Heart left ventricle (tissue), 16 donors: ENCODE measurements at regions of chr15 and their contacts with region 1.

Region 1: DNA sequence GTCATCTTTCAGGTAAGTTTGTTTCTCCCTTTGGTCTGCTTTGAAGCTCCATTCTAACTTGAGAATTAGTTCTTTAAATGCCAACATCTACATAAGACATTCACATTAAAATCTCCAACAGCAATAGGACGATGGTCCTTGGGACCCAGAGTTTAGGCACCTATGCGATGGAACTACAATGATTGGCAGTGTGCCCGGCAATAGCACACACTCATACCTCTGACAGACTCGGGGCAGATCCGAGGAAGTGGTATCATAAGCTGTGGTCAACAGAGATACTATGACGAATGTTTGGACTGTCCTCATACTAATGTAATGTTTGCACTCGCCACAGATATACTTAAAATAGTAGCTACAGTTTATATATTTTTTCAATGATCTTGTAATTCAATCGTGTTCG is 34.2 kb upstream of the NR2F2 start:
- DNase-seq: no peak
- ATAC-seq: no peak
- H3K4me3 ChIP-seq: no peak overlapping the region
- H3K27ac ChIP-seq: no peak overlapping the region
- H3K4me1 ChIP-seq: no peaks in the 10 kb centered on the region
- H3K27me3 ChIP-seq: no peaks in the 10 kb centered on the region
- CTCF ChIP-seq: no peak
- POLR2A ChIP-seq: no peak

Region 2: DNA sequence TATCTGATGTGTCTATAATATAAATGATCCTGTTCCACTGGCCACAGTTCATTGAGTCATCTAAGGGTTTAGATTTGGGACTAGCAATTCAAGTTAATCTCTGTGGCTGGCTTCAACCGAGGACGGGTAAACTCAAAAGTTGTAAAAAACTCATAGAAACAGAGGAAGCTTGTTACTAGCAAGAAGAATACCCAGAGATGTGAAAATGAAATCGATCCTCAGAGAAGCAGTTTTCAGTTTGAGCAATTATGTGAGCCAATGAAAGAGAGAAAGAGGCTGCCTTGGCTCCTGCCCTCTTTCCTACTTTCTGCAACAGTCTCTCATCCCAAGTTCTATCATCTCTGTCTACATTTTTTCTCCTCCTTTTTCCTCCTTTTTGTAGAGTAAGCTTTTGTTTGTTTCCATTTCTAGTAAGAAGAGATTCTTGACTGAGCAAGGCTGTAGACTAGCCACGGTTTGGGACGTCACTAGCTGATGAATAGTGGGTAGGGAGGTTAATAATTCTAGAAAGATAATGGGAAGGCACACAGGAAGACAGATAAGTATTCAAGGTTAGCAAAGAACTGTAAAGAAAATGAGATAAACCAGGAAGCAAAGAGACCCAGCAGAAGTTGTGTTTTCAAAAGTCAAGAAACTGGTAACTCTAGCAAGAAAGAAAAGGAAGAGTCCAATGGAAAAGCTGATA is 264.7 kb before region 1 on chr15:
- intact Hi-C with region 1: no loop called
- DNase-seq: no peak
- ATAC-seq: no peak
- H3K4me3 ChIP-seq: no peak overlapping the region
- H3K27ac ChIP-seq: no peak overlapping the region
- H3K4me1 ChIP-seq: peaks cover 0 to 2% (median 0%) of the 10 kb centered on the region in 12 donors
- H3K27me3 ChIP-seq: no peaks in the 10 kb centered on the region
- CTCF ChIP-seq: no peak
- POLR2A ChIP-seq: no peak

Region 3: DNA sequence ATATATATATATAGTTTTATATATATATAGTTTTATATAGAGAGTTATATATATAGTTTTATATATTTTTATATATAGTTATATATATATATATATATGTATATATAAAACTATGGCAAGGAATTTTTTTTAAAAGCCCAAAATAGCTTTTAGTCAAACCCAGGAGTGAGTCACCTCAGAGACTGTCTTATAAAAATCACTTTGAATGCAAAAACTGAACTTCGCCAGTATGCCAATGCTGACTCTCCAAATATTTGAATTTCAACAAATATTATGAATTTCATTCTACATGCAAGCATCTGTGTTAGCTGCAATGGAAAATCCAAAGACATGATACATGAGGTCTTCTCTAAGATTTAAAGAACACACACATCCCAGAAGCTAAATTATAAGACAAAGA is 98.5 kb before region 1 on chr15:
- intact Hi-C with region 1: loop called in 1 of 10 experiments (anchors 10 kb)
- DNase-seq: no peak
- ATAC-seq: no peak
- H3K4me3 ChIP-seq: no peak overlapping the region
- H3K27ac ChIP-seq: no peak overlapping the region
- H3K4me1 ChIP-seq: no peaks in the 10 kb centered on the region
- H3K27me3 ChIP-seq: peaks cover 0 to 5% (median 0%) of the 10 kb centered on the region in 9 donors
- CTCF ChIP-seq: no peak
- POLR2A ChIP-seq: no peak

Region 4: DNA sequence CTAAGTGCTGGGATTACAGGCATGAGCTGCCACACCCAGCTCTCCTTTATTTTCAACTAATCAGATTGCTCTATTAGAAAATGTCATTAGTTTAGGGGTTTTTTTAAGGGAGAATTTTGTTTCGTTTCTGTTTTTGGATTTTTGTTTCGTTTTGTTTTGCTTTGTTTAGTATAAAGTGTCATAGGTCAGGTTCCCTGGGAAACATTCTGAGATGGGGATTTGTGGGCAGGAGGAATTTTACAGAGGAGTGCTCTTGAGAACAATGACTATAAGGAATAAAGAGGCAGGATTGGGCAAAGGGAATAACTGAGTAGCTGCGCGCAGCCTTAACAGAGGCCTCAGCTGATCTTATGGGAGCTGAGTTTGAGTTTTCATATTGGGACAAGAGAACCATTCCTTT is 52.6 kb before region 1 on chr15:
- intact Hi-C with region 1: no loop called
- DNase-seq: no peak
- ATAC-seq: no peak
- H3K4me3 ChIP-seq: no peak overlapping the region
- H3K27ac ChIP-seq: no peak overlapping the region
- H3K4me1 ChIP-seq: no peaks in the 10 kb centered on the region
- H3K27me3 ChIP-seq: no peaks in the 10 kb centered on the region
- CTCF ChIP-seq: no peak
- POLR2A ChIP-seq: no peak